ENCODE measurements at regions of chrX and their contacts with region 1.

Region 1: GRCh38 chrX:74343343-74344279 is 39.6 kb downstream of the ZCCHC13 start:
- DNase-seq: peak in 4 of 5 donors; percentile 28 to 53 (median 44)
- ATAC-seq: peak in 3 of 4 donors; percentile 91 to 94 (median 93)
- H3K4me3 ChIP-seq: no peak overlapping the region
- H3K27ac ChIP-seq: no peak overlapping the region
- H3K4me1 ChIP-seq: peaks cover 0 to 5% (median 0%) of the 10 kb centered on the region in 12 donors
- H3K27me3 ChIP-seq: peaks cover 0 to 4% (median 0%) of the 10 kb centered on the region in 9 donors
- CTCF ChIP-seq: peak; percentile 34 to 68 (median 58)
- POLR2A ChIP-seq: no peak

Region 2: DNA sequence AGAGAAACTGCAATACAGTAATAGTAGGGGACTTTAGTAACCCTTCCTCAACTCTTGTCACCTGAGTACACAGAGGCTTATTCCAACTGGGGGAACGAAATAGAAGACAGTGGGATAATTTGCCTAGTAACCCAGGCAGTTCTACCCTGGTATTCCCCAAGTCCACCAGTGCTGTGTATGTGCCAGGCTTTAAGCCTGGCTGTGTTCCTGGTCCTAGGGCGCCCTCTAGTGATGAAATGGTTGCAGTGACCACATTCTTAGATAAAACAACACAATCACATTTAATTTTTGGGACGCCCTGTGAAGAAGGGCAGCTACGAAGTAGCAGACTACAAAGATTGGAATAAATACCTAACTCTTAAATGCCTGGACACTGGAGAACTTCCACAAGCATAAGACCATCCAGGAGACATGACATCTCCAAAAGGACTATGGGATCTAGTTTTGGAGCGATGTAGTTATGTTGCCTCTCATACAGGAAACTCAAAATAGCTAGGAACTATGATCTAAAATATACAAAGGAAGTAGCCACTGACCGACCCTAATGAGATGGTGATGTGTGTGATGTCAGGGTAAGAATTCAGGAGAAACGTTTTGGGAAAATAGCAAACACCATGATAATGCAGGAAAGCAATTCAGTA is 328.1 kb before region 1 on chrX:
- intact Hi-C with region 1: loop called in 1 of 10 experiments (anchors 10 kb)
- DNase-seq: peak in 4 of 5 donors; percentile 13 to 60 (median 33)
- ATAC-seq: peak in 3 of 4 donors; percentile 74 to 91 (median 89)
- H3K4me3 ChIP-seq: no peak overlapping the region
- H3K27ac ChIP-seq: no peak overlapping the region
- H3K4me1 ChIP-seq: peaks cover 0 to 4% (median 0%) of the 10 kb centered on the region in 12 donors
- H3K27me3 ChIP-seq: no peaks in the 10 kb centered on the region
- CTCF ChIP-seq: peak; percentile 48 to 90 (median 68)
- POLR2A ChIP-seq: no peak

Region 3: GRCh38 chrX:74133156-74133796 is 210.3 kb before region 1 on chrX:
- intact Hi-C with region 1: loop called in 5 of 10 experiments (anchors 5 to 10 kb)
- DNase-seq: no peak
- ATAC-seq: peak in 3 of 4 donors; percentile 53 to 78 (median 74)
- H3K4me3 ChIP-seq: no peak overlapping the region
- H3K27ac ChIP-seq: peak overlapping the region in 1 of 12 donors; percentile 26
- H3K4me1 ChIP-seq: no peaks in the 10 kb centered on the region
- H3K27me3 ChIP-seq: peaks cover 0 to 2% (median 0%) of the 10 kb centered on the region in 9 donors
- CTCF ChIP-seq: peak; percentile 48 to 85 (median 66)
- POLR2A ChIP-seq: no peak

Region 4: GRCh38 chrX:74291964-74292807 is 51.4 kb before region 1 on chrX:
- intact Hi-C with region 1: loop called in 3 of 10 experiments (anchors 2 to 5 kb)
- DNase-seq: peak; percentile 85 to 93 (median 89)
- ATAC-seq: peak; percentile 94 to 96 (median 95)
- H3K4me3 ChIP-seq: peak overlapping the region; percentile 45 to 84 (median 68)
- H3K27ac ChIP-seq: peak overlapping the region; percentile 78 to 94 (median 91)
- H3K4me1 ChIP-seq: peaks cover 0 to 25% (median 10%) of the 10 kb centered on the region in 12 donors
- H3K27me3 ChIP-seq: peaks cover 0 to 5% (median 0%) of the 10 kb centered on the region in 9 donors
- CTCF ChIP-seq: peak in 6 of 12 donors; percentile 13 to 50 (median 22)
- POLR2A ChIP-seq: peak in 1 of 2 donors; percentile 61

Measured in heart left ventricle (tissue), 16 donors.